ENCODE measurements at regions of chr5 and their contacts with region 1.

Region 1: DNA sequence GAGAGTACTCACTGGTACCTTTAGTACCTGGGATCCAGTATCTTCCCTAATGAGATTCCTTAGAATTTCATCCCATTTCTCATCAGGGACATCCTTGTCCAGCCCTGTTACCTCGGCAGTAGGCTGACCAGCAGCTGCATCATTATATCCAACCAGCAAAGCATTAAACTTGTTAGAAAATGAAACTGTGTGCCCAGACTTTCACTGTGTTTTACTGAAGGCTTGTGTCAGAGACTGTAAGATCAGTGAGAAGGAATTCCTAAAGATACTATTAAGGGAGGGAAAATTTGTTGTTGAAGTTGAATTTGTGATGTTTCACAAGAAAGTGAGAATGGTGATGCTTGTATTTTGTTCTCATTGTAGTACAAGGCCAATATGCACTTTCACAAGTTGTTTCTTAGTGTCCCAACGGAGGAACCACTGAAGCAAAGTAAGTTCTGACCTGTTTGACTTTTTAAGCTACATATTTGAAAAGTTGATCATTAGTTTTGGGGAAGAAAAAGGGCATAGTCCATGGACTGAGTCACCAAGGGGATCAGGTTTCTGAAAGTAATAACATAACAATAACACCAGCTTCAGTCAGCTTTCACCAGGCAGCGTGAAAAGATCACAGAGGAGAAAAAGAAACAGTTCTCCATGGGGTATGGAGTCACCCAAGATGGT is 48.8 kb downstream of the GRAMD2B start:
- DNase-seq: no peak
- H3K4me3 ChIP-seq: no peak overlapping the region
- H3K27ac ChIP-seq: peak overlapping the region; percentile 60
- H3K4me1 ChIP-seq: peaks cover 31% of the 10 kb centered on the region
- H3K27me3 ChIP-seq: no peaks in the 10 kb centered on the region
- CTCF ChIP-seq: no peak
- POLR2A ChIP-seq: no peak

Region 2: DNA sequence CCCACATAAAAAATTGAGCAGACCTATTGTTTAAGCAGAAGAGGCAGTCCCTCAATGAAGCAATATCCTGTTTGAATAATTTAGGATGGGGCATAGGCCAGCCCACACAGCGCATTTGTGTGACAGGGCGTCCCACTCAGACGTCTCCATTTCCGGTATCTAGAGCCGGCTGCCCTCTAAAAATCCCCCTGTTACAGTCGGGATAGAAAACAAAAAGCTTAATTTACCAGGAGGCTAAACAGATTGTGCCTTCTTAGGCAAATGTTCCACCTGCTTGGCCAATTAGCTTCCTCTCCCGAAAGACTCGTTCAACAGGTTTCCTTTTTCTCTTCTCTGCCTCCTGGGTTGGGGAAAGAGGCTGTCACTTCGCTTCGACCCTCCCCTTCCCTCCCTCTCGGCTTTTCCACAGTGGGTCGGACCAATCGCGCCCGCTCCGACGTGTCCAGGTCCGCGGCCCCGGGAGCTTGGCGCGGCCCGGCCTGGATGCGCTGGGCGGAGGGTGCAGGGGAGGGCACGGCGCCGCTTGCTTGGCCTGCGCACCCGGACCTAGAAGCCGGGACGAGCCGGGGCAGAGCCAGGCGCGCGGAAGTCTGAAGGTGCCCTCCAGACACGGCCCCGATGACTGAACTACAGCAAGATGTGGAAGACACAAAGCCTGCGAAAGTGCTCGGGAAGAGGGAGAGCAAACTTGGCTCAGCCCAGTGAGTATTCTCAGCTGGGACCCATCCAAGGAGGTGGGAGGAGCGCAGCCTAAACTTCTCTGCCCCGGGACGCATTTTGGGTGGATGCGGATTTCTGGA is 48.8 kb before region 1 on chr5 and contains the start of gene GRAMD2B:
- intact Hi-C with region 1: loop called (anchors 10 kb)
- DNase-seq: peak in 1 of 2 donors; percentile 94
- H3K4me3 ChIP-seq: peak within 1 kb of the TSS; percentile 57 to 74
- H3K27ac ChIP-seq: peak within 1 kb of the TSS; percentile 86
- H3K4me1 ChIP-seq: peaks cover 34% of the 10 kb centered on the region
- H3K27me3 ChIP-seq: no peaks in the 10 kb centered on the region
- CTCF ChIP-seq: no peak
- POLR2A ChIP-seq: peak in 1 of 2 donors; percentile 82
- total RNA-seq, gene GRAMD2B: 76.9 TPM

Measured in vagina (tissue), 2 donors.